B cell (primary cell): ENCODE measurements at regions of chr9 and their contacts with region 1.

Region 1: DNA sequence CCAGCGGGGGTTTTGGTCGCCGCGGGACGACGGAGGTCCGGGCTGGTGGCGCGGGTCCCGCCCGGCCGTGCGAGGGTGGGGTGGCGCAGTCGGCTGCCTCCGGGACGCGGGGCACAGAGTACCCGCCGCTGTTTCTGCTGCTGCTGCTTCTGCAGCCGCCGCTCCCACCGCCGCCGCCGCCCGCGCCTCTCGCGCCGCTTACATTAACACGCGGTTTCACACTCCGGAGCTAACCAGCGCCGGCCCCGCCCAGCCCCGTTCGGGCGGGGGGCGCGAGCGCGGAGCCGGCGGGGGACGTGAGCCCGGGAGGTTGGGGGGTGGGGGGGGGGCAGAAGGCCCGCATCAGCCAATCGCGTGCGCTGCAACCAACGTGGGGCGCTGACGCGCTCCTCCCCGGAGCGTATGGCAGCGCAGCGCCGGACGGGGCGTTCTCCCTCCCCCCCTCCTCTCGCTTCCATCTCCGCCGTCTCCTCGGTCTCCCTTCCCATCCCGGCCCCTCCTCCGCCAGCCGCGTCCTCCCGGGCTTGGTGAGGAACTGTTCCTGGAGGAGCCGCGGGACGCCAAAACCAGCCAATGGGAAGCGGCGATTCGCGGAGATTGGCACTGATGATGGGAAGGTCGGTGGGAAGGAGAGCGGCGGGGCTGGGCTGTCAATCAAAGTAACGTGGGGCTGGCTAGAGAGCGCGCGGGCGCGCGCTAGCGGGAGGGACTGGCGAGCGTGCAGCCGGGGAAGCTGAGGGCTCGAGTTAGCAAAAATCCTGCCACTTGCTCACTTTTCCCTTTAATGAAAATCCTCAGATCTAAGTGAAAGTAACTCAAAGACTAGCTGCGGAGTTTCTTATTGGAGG is at the start of gene TLE1:
- DNase-seq: peak; percentile 97
- ATAC-seq: peak; percentile 79
- H3K4me3 ChIP-seq: peak within 1 kb of the TSS; percentile 76 to 92 (median 78)
- H3K4me3 Mint-ChIP-seq: peak within 1 kb of the TSS; percentile 98
- H3K27ac ChIP-seq: peak within 1 kb of the TSS; percentile 82 to 87
- H3K27ac Mint-ChIP-seq: peak within 1 kb of the TSS; percentile 95
- H3K4me1 ChIP-seq: peaks cover 32 to 35% of the 10 kb centered on the region in 2 donors
- H3K4me1 Mint-ChIP-seq: peaks cover 16% of the 10 kb centered on the region
- H3K27me3 ChIP-seq: peaks cover 0 to 21% (median 4%) of the 10 kb centered on the region in 4 experiments
- H3K27me3 Mint-ChIP-seq: peaks cover 12% of the 10 kb centered on the region
- CTCF ChIP-seq: no peak
- total RNA-seq, gene TLE1: 27.6 and 33.5 TPM in 2 replicates

Region 2: GRCh38 chr9:81529556-81530195 is 159.9 kb before region 1 on chr9:
- CTCF ChIA-PET with region 1: interaction called, 128 read pairs
- POLR2A ChIA-PET with region 1: interaction called, 3 read pairs
- intact Hi-C with region 1: no loop called
- DNase-seq: no peak
- ATAC-seq: no peak
- H3K4me3 ChIP-seq: no peak overlapping the region
- H3K4me3 Mint-ChIP-seq: no peak overlapping the region
- H3K27ac ChIP-seq: no peak overlapping the region
- H3K27ac Mint-ChIP-seq: no peak overlapping the region
- H3K4me1 ChIP-seq: peaks cover 15% of the 10 kb centered on the region in 2 donors
- H3K4me1 Mint-ChIP-seq: peaks cover 20% of the 10 kb centered on the region
- H3K27me3 ChIP-seq: peaks cover 0 to 3% (median 0%) of the 10 kb centered on the region in 4 experiments
- H3K27me3 Mint-ChIP-seq: peaks cover 13% of the 10 kb centered on the region
- CTCF ChIP-seq: no peak

Region 3: GRCh38 chr9:81619348-81620001 is 70.1 kb before region 1 on chr9:
- CTCF ChIA-PET with region 1: interaction called, 19 read pairs
- POLR2A ChIA-PET with region 1: no interaction called
- intact Hi-C with region 1: no loop called
- DNase-seq: peak; percentile 29
- ATAC-seq: no peak
- H3K4me3 ChIP-seq: no peak overlapping the region
- H3K4me3 Mint-ChIP-seq: peak overlapping the region; percentile 42
- H3K27ac ChIP-seq: no peak overlapping the region
- H3K27ac Mint-ChIP-seq: no peak overlapping the region
- H3K4me1 ChIP-seq: peaks cover 17 to 18% of the 10 kb centered on the region in 2 donors
- H3K4me1 Mint-ChIP-seq: peaks cover 43% of the 10 kb centered on the region
- H3K27me3 ChIP-seq: no peaks in the 10 kb centered on the region
- H3K27me3 Mint-ChIP-seq: no peaks in the 10 kb centered on the region
- CTCF ChIP-seq: peak; percentile 23

Region 4: GRCh38 chr9:81656004-81656403 is 33.6 kb before region 1 on chr9:
- CTCF ChIA-PET with region 1: interaction called, 36 read pairs
- POLR2A ChIA-PET with region 1: interaction called, 7 read pairs
- intact Hi-C with region 1: loop called (anchors 1 kb)
- DNase-seq: peak; percentile 89
- ATAC-seq: peak; percentile 86
- H3K4me3 ChIP-seq: peak overlapping the region in 4 of 5 experiments; percentile 31 to 67 (median 38)
- H3K4me3 Mint-ChIP-seq: peak overlapping the region; percentile 85
- H3K27ac ChIP-seq: peak overlapping the region; percentile 89 to 91
- H3K27ac Mint-ChIP-seq: peak overlapping the region; percentile 95
- H3K4me1 ChIP-seq: peaks cover 70 to 86% of the 10 kb centered on the region in 2 donors
- H3K4me1 Mint-ChIP-seq: peaks cover 80% of the 10 kb centered on the region
- H3K27me3 ChIP-seq: no peaks in the 10 kb centered on the region
- H3K27me3 Mint-ChIP-seq: no peaks in the 10 kb centered on the region
- CTCF ChIP-seq: no peak

Region 5: GRCh38 chr9:81729135-81729534 is 39.6 kb after region 1 on chr9:
- CTCF ChIA-PET with region 1: interaction called, 3 read pairs
- POLR2A ChIA-PET with region 1: interaction called, 9 read pairs
- intact Hi-C with region 1: loop called (anchors 1 kb)
- DNase-seq: peak; percentile 76
- ATAC-seq: peak; percentile 73
- H3K4me3 ChIP-seq: peak overlapping the region; percentile 15 to 54 (median 42)
- H3K4me3 Mint-ChIP-seq: peak overlapping the region; percentile 78
- H3K27ac ChIP-seq: peak overlapping the region; percentile 60 to 69
- H3K27ac Mint-ChIP-seq: peak overlapping the region; percentile 85
- H3K4me1 ChIP-seq: peaks cover 22 to 24% of the 10 kb centered on the region in 2 donors
- H3K4me1 Mint-ChIP-seq: peaks cover 22% of the 10 kb centered on the region
- H3K27me3 ChIP-seq: no peaks in the 10 kb centered on the region
- H3K27me3 Mint-ChIP-seq: no peaks in the 10 kb centered on the region
- CTCF ChIP-seq: no peak

Region 6: GRCh38 chr9:82606492-82607382 is 917.2 kb after region 1 on chr9:
- CTCF ChIA-PET with region 1: interaction called, 11 read pairs
- POLR2A ChIA-PET with region 1: no interaction called
- intact Hi-C with region 1: no loop called
- DNase-seq: peak; percentile 68
- ATAC-seq: peak; percentile 33
- H3K4me3 ChIP-seq: no peak overlapping the region
- H3K4me3 Mint-ChIP-seq: no peak overlapping the region
- H3K27ac ChIP-seq: no peak overlapping the region
- H3K27ac Mint-ChIP-seq: no peak overlapping the region
- H3K4me1 ChIP-seq: no peaks in the 10 kb centered on the region
- H3K4me1 Mint-ChIP-seq: no peaks in the 10 kb centered on the region
- H3K27me3 ChIP-seq: no peaks in the 10 kb centered on the region
- H3K27me3 Mint-ChIP-seq: no peaks in the 10 kb centered on the region
- CTCF ChIP-seq: peak; percentile 65